OCI-LY7 (cell line): ENCODE measurements at regions of chr2 and their contacts with region 1.

Region 1: GRCh38 chr2:36461039-36461681 is 105.6 kb downstream of the CRIM1 start:
- DNase-seq: peak; percentile 47
- H3K4me3 ChIP-seq: no peak overlapping the region
- H3K27ac ChIP-seq: no peak overlapping the region
- H3K4me1 ChIP-seq: peaks cover 23% of the 10 kb centered on the region
- CTCF ChIP-seq: no peak

Region 2: GRCh38 chr2:36589230-36589630 is 128.1 kb after region 1 on chr2:
- CTCF ChIA-PET with region 1: no interaction called
- POLR2A ChIA-PET with region 1: no interaction called
- intact Hi-C with region 1: no loop called
- DNase-seq: no peak
- H3K4me3 ChIP-seq: no peak overlapping the region
- H3K27ac ChIP-seq: no peak overlapping the region
- H3K4me1 ChIP-seq: no peaks in the 10 kb centered on the region
- CTCF ChIP-seq: no peak

Region 3: GRCh38 chr2:36912695-36913094 is 451.5 kb after region 1 on chr2:
- CTCF ChIA-PET with region 1: no interaction called
- POLR2A ChIA-PET with region 1: interaction called, 10 read pairs
- intact Hi-C with region 1: no loop called
- DNase-seq: no peak
- H3K4me3 ChIP-seq: no peak overlapping the region
- H3K27ac ChIP-seq: no peak overlapping the region
- H3K4me1 ChIP-seq: no peaks in the 10 kb centered on the region
- CTCF ChIP-seq: no peak